ENCODE measurements at regions of chr22 and their contacts with region 1.

Region 1: GRCh38 chr22:50469377-50470305 is 5.2 kb downstream of the SBF1 start:
- DNase-seq: peak; percentile 87 to 100 (median 96)
- ATAC-seq: peak; percentile 78 to 87
- H3K4me3 Mint-ChIP-seq: peak overlapping the region; percentile 75 to 98 (median 86)
- H3K27ac Mint-ChIP-seq: peak overlapping the region; percentile 88 to 98 (median 96)
- H3K4me1 Mint-ChIP-seq: peaks cover 40 to 86% (median 74%) of the 10 kb centered on the region in 4 donors
- H3K27me3 Mint-ChIP-seq: no peaks in the 10 kb centered on the region

Region 2: DNA sequence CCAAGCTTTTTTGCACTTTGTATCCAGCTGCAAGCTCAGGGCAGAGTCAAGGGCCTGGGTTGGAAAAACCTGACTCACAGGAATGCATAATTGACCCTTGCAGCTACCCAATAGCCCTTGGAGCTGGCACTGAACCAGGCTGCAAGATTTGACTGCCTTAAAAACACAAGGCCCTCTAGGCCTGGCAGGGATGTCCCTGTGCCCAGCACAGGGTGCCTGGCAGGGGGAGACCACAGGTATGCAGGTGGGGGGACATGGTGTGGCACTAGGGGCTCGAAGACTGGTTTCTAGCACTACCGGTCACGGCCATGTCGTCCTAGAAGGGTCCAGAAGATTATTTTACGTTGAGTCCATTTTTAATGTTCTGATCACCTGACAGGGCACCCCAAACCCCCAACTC is 25.0 kb before region 1 on chr22:
- POLR2A ChIA-PET with region 1: interaction called, 92 read pairs
- DNase-seq: peak in 1 of 10 donors; percentile 35
- ATAC-seq: peak in 1 of 2 donors; percentile 15
- H3K4me3 Mint-ChIP-seq: peak overlapping the region in 8 of 10 donors; percentile 53 to 76 (median 72)
- H3K27ac Mint-ChIP-seq: peak overlapping the region; percentile 75 to 97 (median 92)
- H3K4me1 Mint-ChIP-seq: peaks cover 23 to 57% (median 40%) of the 10 kb centered on the region in 4 donors
- H3K27me3 Mint-ChIP-seq: no peaks in the 10 kb centered on the region

Region 3: DNA sequence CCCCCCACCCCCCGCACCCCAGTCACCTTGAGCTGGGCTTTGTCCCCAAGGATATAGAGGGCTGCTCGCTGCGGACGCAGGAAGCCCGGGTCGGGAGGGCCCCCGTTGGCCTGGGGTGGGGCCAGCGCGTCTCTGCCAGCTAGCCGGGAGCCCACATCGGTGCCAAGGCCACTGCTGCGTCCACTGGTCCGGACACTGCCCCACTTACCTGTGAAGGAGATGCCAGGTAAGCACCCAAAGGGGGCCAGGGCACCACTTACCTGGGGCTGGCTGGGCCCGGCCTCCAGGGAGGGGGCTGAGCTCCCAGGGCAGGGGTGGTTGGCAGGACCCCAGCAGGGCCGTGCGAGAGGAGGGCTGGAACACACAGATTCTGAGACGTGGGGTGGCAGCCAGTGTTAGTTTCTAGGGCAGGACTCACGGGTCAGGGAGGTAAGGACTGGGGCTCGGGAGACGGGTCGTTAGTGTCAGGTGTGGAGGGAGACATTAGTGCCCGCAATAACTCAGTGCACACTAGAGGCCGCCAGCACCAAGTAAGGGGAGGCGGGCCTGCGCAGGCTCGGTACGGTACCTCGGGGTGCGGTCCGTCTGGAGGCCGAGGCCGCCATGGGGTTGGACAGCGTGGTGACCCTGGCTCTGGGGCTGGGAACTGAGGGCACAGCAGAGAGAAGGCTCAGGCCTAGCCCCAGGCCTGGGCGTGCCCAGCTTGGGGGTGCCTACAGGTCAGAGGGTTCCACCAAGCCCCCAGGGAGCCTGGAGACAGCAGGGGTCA is 13.0 kb before region 1 on chr22:
- POLR2A ChIA-PET with region 1: interaction called, 21 read pairs
- DNase-seq: no peak
- ATAC-seq: peak in 1 of 2 donors; percentile 47
- H3K4me3 Mint-ChIP-seq: peak overlapping the region in 1 of 10 donors; percentile 48
- H3K27ac Mint-ChIP-seq: peak overlapping the region in 4 of 10 donors; percentile 41 to 83 (median 45)
- H3K4me1 Mint-ChIP-seq: peaks cover 6 to 15% (median 9%) of the 10 kb centered on the region in 4 donors
- H3K27me3 Mint-ChIP-seq: no peaks in the 10 kb centered on the region

Region 4: GRCh38 chr22:50481440-50482106 is 11.9 kb after region 1 on chr22 and contains the start of gene ADM2:
- POLR2A ChIA-PET with region 1: interaction called, 29 read pairs
- DNase-seq: peak in 9 of 10 donors; percentile 44 to 78 (median 60)
- ATAC-seq: peak; percentile 87
- H3K4me3 Mint-ChIP-seq: peak within 1 kb of the TSS; percentile 65 to 83 (median 75)
- H3K27ac Mint-ChIP-seq: peak within 1 kb of the TSS in 7 of 10 donors; percentile 5 to 83 (median 58)
- H3K4me1 Mint-ChIP-seq: peaks cover 6 to 17% (median 11%) of the 10 kb centered on the region in 4 donors
- H3K27me3 Mint-ChIP-seq: peaks cover 0 to 4% (median 0%) of the 10 kb centered on the region in 5 donors
- polyA plus RNA-seq, gene ADM2: 0.08 to 0.52 (median 0.21) TPM

Region 5: GRCh38 chr22:50490531-50491308 is 21.1 kb after region 1 on chr22:
- POLR2A ChIA-PET with region 1: interaction called, 10 read pairs
- DNase-seq: no peak
- ATAC-seq: peak; percentile 35 to 53
- H3K4me3 Mint-ChIP-seq: peak overlapping the region in 8 of 10 donors; percentile 31 to 74 (median 67)
- H3K27ac Mint-ChIP-seq: peak overlapping the region in 2 of 10 donors; percentile 5 to 31
- H3K4me1 Mint-ChIP-seq: peaks cover 5 to 13% (median 8%) of the 10 kb centered on the region in 4 donors
- H3K27me3 Mint-ChIP-seq: no peaks in the 10 kb centered on the region

Measured in naive thymus-derived CD8-positive, alpha-beta T cell (primary cell).